ENCODE measurements at regions of chr16 and their contacts with region 1.

Region 1: GRCh38 chr16:72093448-72094265 is at the starts of genes DHX38 and TXNL4B:
- DNase-seq: peak; percentile 92 to 99 (median 96)
- ATAC-seq: peak; percentile 99
- H3K4me3 ChIP-seq: peak within 1 kb of the TSS; percentile 75 to 93
- H3K27ac ChIP-seq: peak within 1 kb of the TSS; percentile 89 to 92
- H3K4me1 ChIP-seq: peaks cover 18 to 46% of the 10 kb centered on the region in 2 donors
- H3K27me3 ChIP-seq: no peaks in the 10 kb centered on the region
- CTCF ChIP-seq: no peak
- polyA plus RNA-seq, gene DHX38: 71.5 to 81.6 (median 76.8) TPM
- polyA plus RNA-seq, gene TXNL4B: 16.9 to 22.9 (median 20.3) TPM

Region 2: DNA sequence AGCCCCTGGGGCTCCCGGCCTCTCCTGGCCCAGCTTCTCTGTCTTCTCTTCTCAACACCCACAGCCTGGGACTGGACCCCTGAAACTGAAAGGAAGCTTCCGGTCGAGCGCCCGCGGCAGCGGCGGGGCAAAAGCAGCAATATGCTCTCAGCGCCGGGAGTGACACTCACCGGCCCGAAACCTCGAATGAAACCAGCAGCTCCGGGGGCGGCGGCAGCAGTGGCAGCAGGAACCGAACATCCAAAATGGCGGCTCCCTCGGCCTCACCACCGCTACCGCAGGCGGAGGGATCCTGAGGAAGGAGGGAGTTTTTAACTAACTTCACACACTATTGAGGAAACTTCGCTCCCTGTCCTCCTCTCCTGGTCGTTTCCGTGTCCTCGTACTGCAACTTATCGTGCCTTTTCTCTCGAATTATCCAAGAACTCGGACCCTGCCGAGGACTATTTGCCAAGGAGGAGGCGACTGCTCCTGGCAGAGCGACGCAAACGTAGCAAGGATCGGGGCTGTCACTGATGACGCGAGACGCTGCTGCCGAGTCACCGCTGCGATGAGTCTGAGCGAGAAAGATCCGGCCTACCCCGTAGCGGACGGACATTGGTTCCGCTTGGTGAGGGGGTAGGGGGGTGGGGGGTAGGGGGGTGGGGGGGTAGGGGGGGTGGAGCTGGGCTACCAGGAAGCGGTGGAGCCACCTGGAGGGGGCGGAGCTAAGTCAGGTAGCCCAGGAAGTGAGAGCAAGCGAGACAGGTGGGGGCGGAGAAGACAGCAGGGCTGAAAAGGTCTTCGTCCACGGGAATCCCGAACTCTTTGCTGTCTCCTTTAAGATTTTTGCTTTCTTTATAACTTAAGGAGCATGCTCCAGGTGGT is 284.8 kb before region 1 on chr16 and contains the start of gene AP1G1:
- intact Hi-C with region 1: no loop called
- DNase-seq: peak; percentile 96 to 99 (median 98)
- ATAC-seq: peak; percentile 97
- H3K4me3 ChIP-seq: peak within 1 kb of the TSS; percentile 90 to 99
- H3K27ac ChIP-seq: peak within 1 kb of the TSS; percentile 99
- H3K4me1 ChIP-seq: peaks cover 14 to 46% of the 10 kb centered on the region in 2 donors
- H3K27me3 ChIP-seq: no peaks in the 10 kb centered on the region
- CTCF ChIP-seq: no peak
- polyA plus RNA-seq, gene AP1G1: 67.0 to 82.7 (median 76.2) TPM

Region 3: DNA sequence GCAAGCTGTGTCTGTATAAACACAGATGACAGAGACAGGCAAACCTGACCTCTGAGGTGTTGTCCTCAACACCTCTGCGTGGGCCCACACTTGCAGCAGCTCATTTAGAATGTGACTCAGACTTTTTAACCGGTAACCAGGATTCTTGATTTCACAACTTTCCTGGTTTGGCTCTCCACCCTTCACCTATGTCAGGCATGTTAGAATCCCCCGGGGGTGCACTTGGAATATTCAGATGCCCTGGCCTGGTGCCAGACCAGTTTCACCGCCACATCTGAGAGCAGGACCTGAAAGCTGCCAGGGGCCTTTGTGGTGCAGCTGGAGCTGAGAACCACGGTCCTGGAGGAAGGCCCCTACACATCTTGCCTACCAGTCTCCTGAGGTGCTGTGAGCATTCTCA is 80.3 kb before region 1 on chr16:
- intact Hi-C with region 1: loop called in 1 of 2 experiments (anchors 10 kb)
- DNase-seq: no peak
- ATAC-seq: no peak
- H3K4me3 ChIP-seq: no peak overlapping the region
- H3K27ac ChIP-seq: peak overlapping the region; percentile 13 to 20
- H3K4me1 ChIP-seq: peaks cover 0 to 41% of the 10 kb centered on the region in 2 donors
- H3K27me3 ChIP-seq: no peaks in the 10 kb centered on the region
- CTCF ChIP-seq: no peak

Region 4: DNA sequence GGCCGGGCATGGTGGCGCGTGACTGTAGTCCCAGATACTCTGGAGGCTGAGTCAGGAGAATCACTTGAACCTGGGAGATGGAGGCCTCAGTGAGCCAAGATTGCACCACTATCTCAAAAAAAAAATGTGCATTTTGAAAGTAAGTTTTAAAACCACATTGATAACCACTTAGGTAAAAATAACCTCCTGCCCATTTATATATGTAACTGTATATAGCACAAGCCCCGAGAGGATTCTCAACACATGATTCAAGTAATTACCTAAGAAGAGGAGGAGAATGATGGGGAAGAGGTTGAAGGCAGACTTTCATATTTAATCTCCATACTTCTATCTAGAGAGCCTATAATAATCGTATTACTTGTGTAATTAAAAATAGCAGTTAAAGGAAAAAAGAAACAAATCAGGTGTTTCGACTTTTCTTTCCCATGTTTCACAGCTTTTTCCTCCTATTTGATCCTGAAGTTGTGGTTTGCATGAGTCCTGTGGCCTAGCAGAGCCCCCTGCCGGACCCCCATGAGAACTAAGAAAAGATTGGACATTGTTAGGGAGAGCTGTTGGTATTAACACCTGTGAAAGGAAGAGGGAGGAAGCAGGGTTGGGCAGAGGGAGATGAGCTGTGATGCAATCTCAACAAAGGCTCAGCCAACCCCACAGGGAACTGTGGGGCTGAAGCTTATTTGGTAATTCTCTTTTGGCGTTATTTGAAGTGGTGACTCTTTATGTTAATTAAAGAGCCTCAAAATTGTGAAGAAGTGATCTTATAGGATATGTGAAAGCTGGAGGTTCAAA is 56.2 kb after region 1 on chr16:
- intact Hi-C with region 1: no loop called
- DNase-seq: no peak
- ATAC-seq: no peak
- H3K4me3 ChIP-seq: no peak overlapping the region
- H3K27ac ChIP-seq: no peak overlapping the region
- H3K4me1 ChIP-seq: no peaks in the 10 kb centered on the region
- H3K27me3 ChIP-seq: no peaks in the 10 kb centered on the region
- CTCF ChIP-seq: no peak

Region 5: GRCh38 chr16:72203401-72203800 is 109.7 kb after region 1 on chr16:
- intact Hi-C with region 1: no loop called
- DNase-seq: peak in 1 of 4 donors; percentile 42
- ATAC-seq: peak; percentile 59
- H3K4me3 ChIP-seq: no peak overlapping the region
- H3K27ac ChIP-seq: peak overlapping the region; percentile 65 to 97
- H3K4me1 ChIP-seq: peaks cover 0 to 22% of the 10 kb centered on the region in 2 donors
- H3K27me3 ChIP-seq: no peaks in the 10 kb centered on the region
- CTCF ChIP-seq: no peak

Measured in left lung (tissue), 14 donors.